PC-9 (cell line): ENCODE measurements at regions of chr15 and their contacts with region 1.

Region 1: GRCh38 chr15:89566141-89566540 is 9.1 kb upstream of the TICRR start:
- DNase-seq: no peak
- H3K4me3 ChIP-seq: no peak overlapping the region
- H3K27ac ChIP-seq: no peak overlapping the region
- H3K4me1 ChIP-seq: no peaks in the 10 kb centered on the region
- H3K27me3 ChIP-seq: no peaks in the 10 kb centered on the region
- CTCF ChIP-seq: no peak

Region 2: DNA sequence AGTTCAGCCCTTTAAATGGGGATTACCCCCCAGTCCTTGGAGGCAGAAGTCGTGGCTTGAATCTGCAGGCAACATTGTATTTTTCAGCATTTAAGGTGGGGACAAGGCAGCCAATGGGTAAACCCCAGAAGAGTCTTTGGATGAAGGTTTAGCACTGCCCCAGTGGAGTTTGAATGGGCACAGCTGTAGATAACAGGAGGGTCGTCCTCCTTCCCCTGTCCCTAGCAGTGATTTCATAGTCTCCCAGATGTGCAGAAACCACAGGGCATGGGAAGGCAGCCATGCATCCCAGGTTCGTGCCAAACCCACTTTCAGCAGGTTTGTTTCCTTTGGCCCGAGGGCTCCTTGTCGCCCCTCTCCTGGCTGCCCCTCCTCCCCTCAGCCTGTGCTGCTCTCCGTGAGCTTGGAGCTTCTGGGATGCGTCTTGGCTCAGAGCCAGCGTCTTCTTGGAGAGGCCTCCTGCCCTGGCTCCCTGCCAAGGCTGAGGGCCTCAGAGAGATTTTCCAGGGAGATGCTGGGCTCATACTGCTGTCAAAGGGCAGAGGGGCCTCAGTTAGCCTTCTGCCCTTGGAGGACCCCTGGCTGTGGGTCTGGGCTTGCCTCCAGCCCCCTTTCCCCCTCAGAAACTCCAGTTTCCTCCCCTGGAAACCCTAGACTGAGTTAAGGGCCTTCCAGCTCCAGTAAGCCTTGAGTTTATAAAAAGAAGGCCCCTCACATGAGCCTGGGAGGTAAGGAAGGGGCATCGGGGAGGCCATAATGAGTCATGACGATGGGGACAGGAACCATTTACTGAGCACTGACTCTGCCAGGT is 182.6 kb before region 1 on chr15:
- CTCF ChIA-PET with region 1: no interaction called
- POLR2A ChIA-PET with region 1: interaction called, 15 read pairs
- intact Hi-C with region 1: no loop called
- DNase-seq: peak; percentile 40 to 81
- H3K4me3 ChIP-seq: no peak overlapping the region
- H3K27ac ChIP-seq: no peak overlapping the region
- H3K4me1 ChIP-seq: peaks cover 43% of the 10 kb centered on the region
- H3K27me3 ChIP-seq: no peaks in the 10 kb centered on the region
- CTCF ChIP-seq: no peak